Psoas muscle (tissue), 8 donors: ENCODE measurements at regions of chr1 and their contacts with region 1.

Region 1: DNA sequence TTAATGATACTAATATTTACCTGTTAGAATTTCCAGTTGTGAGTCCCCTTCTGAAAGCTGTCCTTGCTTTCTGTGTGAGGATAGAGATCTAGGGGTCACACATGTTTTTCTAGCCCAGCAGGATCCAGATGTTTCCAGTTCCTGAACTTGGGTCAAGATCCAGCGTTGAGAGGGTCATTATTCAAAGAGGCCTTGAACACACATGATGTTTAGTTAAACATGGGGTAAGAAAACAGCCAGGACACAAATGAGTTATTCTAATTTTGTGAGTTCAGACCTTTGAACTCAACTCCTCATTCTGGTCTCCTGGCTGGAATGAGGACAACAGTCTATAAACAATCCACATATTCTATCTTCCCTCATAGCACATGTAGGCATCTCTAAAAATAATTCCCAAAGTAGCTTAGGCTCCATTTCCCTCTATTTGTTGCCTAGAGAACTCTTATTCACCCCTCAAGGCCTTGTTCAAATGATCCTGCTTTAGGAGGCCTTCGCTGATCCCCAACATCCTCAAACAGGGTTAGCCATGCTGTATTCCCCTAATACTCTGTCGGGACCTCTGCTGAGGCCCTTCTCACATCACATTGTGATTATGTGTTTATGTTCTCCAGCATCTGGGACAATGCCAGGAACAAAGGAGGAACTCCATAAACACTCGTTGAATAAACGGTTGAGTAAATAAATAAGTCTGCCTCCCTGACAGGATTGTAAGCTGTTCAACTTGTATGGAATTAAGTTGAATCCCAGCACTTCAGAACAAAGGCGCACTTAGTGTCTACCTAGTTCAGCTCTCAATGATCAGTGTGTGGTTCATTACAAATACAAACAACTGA is 15.0 kb upstream of the KCNN3 start:
- DNase-seq: no peak
- ATAC-seq: no peak
- H3K4me3 ChIP-seq: no peak overlapping the region
- H3K27ac ChIP-seq: no peak overlapping the region
- H3K4me1 ChIP-seq: no peaks in the 10 kb centered on the region
- H3K27me3 ChIP-seq: no peaks in the 10 kb centered on the region
- CTCF ChIP-seq: no peak

Region 2: GRCh38 chr1:154583773-154584172 is 301.3 kb before region 1 on chr1:
- intact Hi-C with region 1: loop called (anchors 5 kb)
- DNase-seq: no peak
- ATAC-seq: no peak
- H3K4me3 ChIP-seq: no peak overlapping the region
- H3K27ac ChIP-seq: no peak overlapping the region
- H3K4me1 ChIP-seq: no peaks in the 10 kb centered on the region
- H3K27me3 ChIP-seq: no peaks in the 10 kb centered on the region
- CTCF ChIP-seq: no peak